ENCODE measurements at regions of chr3 and their contacts with region 1.

Region 1: DNA sequence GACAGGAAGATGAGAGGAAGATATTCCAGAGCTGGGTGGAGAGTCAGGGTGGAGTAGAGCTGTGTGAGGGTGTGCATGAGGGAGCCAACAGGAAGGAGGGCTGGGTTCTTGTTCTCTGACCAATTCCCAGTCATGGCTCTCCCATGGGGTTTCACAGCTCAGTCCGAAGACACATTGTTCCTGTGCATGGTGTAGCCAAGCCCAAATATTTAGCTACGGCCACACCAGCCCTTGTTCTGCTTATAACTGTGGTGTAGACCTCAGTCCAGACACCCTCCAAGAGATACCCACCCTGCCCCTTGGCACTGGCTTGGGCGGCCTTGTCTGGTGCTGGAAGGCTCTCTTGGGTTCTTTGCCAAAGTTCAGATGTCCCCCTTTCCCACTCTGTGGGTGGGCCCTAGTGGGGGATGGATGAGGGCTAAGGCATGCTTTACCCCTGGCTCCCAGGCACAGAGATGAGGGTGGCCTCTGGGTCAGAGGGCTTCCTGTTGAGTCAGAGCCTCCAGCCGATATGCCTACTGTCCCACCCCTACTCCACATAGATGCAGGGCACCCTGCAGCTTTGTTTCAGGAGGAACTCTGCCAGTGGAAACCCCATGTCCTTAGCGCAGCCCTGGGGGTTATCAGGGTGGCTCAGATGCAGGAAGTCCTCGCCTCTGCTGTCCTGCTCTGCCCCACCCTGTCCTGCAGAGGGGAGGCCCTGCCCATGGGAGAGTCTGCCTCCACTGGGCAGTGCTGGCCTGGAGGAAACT is 271.2 kb upstream of the CTDSPL start:
- DNase-seq: no peak

Region 2: DNA sequence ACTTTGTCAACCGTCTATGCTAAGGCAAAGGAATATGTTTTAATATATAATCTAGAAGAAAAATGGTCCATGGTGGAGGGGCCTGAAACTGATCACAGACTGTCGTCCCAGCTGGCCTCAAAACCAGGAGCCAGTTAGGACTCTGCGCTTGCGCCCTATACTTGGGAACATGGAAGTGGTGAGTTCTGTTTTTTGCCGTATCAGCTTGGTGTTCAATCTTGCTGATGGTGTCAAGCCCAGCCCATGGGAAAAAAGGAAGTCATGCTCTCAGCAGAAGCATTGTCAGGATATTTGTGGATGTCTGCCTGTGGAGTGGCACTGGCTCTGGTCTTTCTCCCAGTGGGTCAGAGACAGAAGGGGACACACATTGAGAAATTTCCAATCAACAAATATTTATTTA is 70.8 kb before region 1 on chr3:
- intact Hi-C with region 1: no loop called
- DNase-seq: no peak

Region 3: DNA sequence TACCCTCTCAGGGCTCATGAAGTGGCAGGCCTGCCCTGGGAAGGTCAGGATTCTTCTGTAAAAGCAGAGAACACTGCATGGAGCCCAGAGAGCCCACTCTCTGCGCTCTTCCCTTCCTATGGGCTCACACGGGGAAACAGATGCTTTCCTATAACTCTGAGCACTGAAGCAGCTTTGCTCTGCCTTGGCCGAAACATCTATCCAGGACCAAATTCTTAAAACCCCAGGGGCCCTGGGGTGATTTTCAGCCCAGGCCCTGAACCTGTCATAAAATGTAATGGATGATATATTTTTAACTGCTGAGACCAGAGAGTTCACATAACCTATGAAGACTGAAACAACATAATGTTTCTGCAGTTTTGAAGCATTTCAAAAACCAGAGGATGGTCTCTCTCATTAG is 21.3 kb after region 1 on chr3:
- intact Hi-C with region 1: no loop called
- DNase-seq: no peak

Region 4: DNA sequence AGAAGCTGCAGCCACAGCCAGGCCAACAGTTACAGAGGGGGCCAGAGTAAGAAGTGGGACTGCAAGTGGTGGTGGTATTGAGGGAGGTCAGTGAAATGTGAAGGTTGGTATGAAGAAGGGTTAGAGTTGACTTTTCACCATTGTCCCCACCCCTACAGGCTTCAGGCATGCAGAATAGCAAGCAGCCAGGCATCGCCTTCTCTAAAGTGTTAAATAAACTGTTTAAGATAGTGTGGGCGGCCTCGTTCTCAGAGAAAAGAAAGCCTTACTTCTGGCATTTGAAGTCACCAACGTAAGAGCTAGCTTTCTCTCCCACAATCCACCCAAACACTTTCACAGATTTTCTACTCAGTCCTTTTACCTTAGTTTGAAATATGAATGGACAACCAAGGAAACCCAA is 41.2 kb after region 1 on chr3:
- intact Hi-C with region 1: no loop called
- DNase-seq: no peak

Region 5: DNA sequence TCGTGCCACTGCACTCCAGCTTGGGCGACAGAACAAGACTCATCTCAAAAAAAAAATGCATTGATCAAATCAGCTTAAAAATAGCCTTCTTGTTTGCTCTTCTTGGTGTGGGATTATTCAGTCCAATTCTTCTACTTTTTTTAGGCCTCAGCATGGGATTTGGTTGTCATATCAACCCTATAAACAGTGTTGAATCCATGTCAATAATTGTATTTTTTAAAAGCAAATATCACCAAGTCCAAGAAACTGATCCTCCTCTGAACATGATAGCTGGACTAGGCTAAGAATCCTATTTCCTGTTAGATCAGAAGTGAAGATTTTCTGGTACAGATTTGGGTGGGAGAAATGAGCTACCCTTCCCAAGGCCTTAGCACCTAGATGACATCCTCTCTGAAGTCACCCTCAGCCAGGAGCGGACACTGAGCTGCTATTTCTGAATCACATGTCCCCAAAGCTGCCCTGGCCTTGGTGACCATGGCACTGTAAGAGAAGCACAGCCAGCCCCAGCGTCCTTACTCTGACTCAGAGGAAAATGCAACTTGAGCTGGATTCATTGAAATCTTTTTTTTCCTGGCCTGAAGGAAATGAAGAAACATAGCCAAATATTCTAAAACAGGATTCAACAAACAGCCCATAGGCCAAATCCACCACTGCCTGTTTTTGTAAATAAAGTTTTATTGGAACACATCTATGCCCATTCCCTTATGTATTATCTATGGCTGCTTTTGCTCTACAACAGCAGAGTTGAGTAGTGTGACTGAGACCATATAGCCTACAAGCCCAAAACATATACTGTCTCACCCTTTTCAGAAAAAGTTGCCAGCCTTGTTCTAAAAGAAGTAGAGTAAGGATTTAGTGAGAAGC is 55.2 kb after region 1 on chr3:
- intact Hi-C with region 1: no loop called
- DNase-seq: no peak

Region 6: DNA sequence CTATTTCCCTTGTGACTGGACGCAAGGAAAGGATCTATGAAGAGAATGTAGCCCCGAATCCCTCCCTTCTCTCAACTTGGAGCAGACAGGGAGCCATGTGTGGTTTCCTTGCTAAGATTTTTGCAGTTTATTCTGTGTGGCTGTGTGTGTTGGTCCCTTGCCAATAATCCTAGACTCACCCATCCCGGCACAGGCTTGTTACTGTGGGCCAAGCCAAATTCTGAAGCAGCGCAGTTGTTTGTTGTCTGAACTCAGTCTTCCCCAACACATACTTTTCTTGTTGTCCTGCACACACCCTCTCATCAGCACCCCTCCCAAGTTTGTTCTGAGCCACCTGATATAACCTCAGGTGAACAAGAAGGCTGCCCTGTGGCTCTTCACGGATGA is 77.9 kb after region 1 on chr3:
- intact Hi-C with region 1: loop called (anchors 5 kb)
- DNase-seq: no peak